ENCODE measurements at regions of chr6 and their contacts with region 1.

Region 1: GRCh38 chr6:34986845-34987246 is 97.8 kb downstream of the ANKS1A start:
- DNase-seq: peak; percentile 23 to 72 (median 59)
- ATAC-seq: peak; percentile 72
- H3K4me3 ChIP-seq: no peak overlapping the region
- H3K4me3 Mint-ChIP-seq: no peak overlapping the region
- H3K27ac ChIP-seq: no peak overlapping the region
- H3K27ac Mint-ChIP-seq: no peak overlapping the region
- H3K4me1 ChIP-seq: no peaks in the 10 kb centered on the region
- H3K4me1 Mint-ChIP-seq: no peaks in the 10 kb centered on the region
- H3K27me3 ChIP-seq: no peaks in the 10 kb centered on the region
- H3K27me3 Mint-ChIP-seq: no peaks in the 10 kb centered on the region

Region 2: GRCh38 chr6:34901930-34902329 is 84.9 kb before region 1 on chr6:
- CTCF ChIA-PET with region 1: no interaction called
- POLR2A ChIA-PET with region 1: no interaction called
- intact Hi-C with region 1: no loop called
- DNase-seq: no peak
- ATAC-seq: no peak
- H3K4me3 ChIP-seq: no peak overlapping the region
- H3K4me3 Mint-ChIP-seq: no peak overlapping the region
- H3K27ac ChIP-seq: no peak overlapping the region
- H3K27ac Mint-ChIP-seq: no peak overlapping the region
- H3K4me1 ChIP-seq: no peaks in the 10 kb centered on the region
- H3K4me1 Mint-ChIP-seq: peaks cover 0 to 16% (median 8%) of the 10 kb centered on the region in 7 donors
- H3K27me3 ChIP-seq: no peaks in the 10 kb centered on the region
- H3K27me3 Mint-ChIP-seq: peaks cover 0 to 17% (median 0%) of the 10 kb centered on the region in 5 donors

Region 3: GRCh38 chr6:35048631-35049083 is 61.8 kb after region 1 on chr6:
- CTCF ChIA-PET with region 1: interaction called, 4 read pairs
- POLR2A ChIA-PET with region 1: interaction called, 3 read pairs
- intact Hi-C with region 1: loop called in 1 of 2 experiments (anchors 1 kb)
- DNase-seq: peak in 6 of 9 donors; percentile 9 to 54 (median 45)
- ATAC-seq: peak; percentile 70
- H3K4me3 ChIP-seq: peak overlapping the region; percentile 34
- H3K4me3 Mint-ChIP-seq: no peak overlapping the region
- H3K27ac ChIP-seq: peak overlapping the region; percentile 48
- H3K27ac Mint-ChIP-seq: no peak overlapping the region
- H3K4me1 ChIP-seq: peaks cover 0 to 18% of the 10 kb centered on the region in 2 donors
- H3K4me1 Mint-ChIP-seq: peaks cover 0 to 17% (median 3%) of the 10 kb centered on the region in 7 donors
- H3K27me3 ChIP-seq: no peaks in the 10 kb centered on the region
- H3K27me3 Mint-ChIP-seq: no peaks in the 10 kb centered on the region